CD8-positive, alpha-beta T cell (primary cell): ENCODE measurements at regions of chrX and their contacts with region 1.

Region 1: GRCh38 chrX:318739-319578 is at the start of gene GTPBP6:
- DNase-seq: peak; percentile 96 to 100 (median 98)
- ATAC-seq: peak; percentile 59
- H3K4me3 ChIP-seq: peak within 1 kb of the TSS; percentile 89 to 97
- H3K4me3 Mint-ChIP-seq: peak within 1 kb of the TSS; percentile 92
- H3K27ac ChIP-seq: peak within 1 kb of the TSS; percentile 95 to 96
- H3K27ac Mint-ChIP-seq: peak within 1 kb of the TSS; percentile 99
- H3K4me1 ChIP-seq: peaks cover 42% of the 10 kb centered on the region
- H3K4me1 Mint-ChIP-seq: peaks cover 25% of the 10 kb centered on the region
- H3K27me3 ChIP-seq: no peaks in the 10 kb centered on the region
- H3K27me3 Mint-ChIP-seq: no peaks in the 10 kb centered on the region
- CTCF ChIP-seq: no peak
- total RNA-seq, gene GTPBP6: 62.2 to 62.5 TPM

Region 2: DNA sequence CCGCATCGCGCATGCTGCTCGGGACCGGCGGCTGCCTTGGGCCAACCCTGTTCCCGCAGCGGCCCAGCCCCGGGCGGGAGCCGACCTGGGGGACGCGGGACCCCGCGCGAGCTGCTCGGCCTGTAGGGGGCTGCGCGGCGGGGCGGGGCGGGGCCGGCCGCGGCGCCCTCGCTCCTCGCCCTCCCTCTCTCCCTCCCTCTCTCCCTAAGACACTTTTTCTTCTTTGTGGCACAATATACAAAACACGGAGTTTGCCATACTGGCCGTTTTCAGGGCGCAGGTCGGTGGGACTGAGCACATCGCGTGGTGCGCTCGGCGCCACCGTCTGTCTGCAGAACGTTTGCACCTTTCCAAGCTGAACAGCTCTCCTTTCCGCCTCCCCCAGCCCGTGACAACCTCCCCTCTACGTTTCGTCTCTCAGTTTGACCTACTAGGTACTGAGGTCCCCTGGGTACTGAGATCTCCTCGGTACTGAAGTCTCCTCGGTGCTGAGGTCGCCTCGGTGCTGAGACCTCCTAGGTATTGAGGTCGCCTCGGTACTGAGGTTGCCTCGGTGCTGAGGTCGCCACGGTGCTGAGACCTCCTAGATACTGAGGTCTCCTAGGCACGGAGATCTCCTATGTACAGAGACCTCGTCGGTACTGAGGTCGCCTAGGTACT is 298.9 kb before region 1 on chrX:
- CTCF ChIA-PET with region 1: no interaction called
- POLR2A ChIA-PET with region 1: no interaction called
- intact Hi-C with region 1: no loop called
- DNase-seq: peak in 4 of 9 experiments; percentile 19 to 49 (median 48)
- ATAC-seq: no peak
- H3K4me3 ChIP-seq: peak overlapping the region in 1 of 2 experiments; percentile 37
- H3K4me3 Mint-ChIP-seq: no peak overlapping the region
- H3K27ac ChIP-seq: no peak overlapping the region
- H3K27ac Mint-ChIP-seq: no peak overlapping the region
- H3K4me1 ChIP-seq: peaks cover 4% of the 10 kb centered on the region
- H3K4me1 Mint-ChIP-seq: no peaks in the 10 kb centered on the region
- H3K27me3 ChIP-seq: no peaks in the 10 kb centered on the region
- H3K27me3 Mint-ChIP-seq: no peaks in the 10 kb centered on the region
- CTCF ChIP-seq: no peak

Region 3: GRCh38 chrX:250965-251364 is 68.0 kb before region 1 on chrX:
- CTCF ChIA-PET with region 1: no interaction called
- POLR2A ChIA-PET with region 1: no interaction called
- intact Hi-C with region 1: loop called in 1 of 2 experiments (anchors 2 kb)
- DNase-seq: peak in 4 of 9 experiments; percentile 16 to 56 (median 26)
- ATAC-seq: peak; percentile 81
- H3K4me3 ChIP-seq: peak overlapping the region in 1 of 2 experiments; percentile 2
- H3K4me3 Mint-ChIP-seq: peak overlapping the region; percentile 63
- H3K27ac ChIP-seq: peak overlapping the region; percentile 45 to 80
- H3K27ac Mint-ChIP-seq: peak overlapping the region; percentile 96
- H3K4me1 ChIP-seq: peaks cover 16% of the 10 kb centered on the region
- H3K4me1 Mint-ChIP-seq: peaks cover 26% of the 10 kb centered on the region
- H3K27me3 ChIP-seq: no peaks in the 10 kb centered on the region
- H3K27me3 Mint-ChIP-seq: no peaks in the 10 kb centered on the region
- CTCF ChIP-seq: no peak

Region 4: DNA sequence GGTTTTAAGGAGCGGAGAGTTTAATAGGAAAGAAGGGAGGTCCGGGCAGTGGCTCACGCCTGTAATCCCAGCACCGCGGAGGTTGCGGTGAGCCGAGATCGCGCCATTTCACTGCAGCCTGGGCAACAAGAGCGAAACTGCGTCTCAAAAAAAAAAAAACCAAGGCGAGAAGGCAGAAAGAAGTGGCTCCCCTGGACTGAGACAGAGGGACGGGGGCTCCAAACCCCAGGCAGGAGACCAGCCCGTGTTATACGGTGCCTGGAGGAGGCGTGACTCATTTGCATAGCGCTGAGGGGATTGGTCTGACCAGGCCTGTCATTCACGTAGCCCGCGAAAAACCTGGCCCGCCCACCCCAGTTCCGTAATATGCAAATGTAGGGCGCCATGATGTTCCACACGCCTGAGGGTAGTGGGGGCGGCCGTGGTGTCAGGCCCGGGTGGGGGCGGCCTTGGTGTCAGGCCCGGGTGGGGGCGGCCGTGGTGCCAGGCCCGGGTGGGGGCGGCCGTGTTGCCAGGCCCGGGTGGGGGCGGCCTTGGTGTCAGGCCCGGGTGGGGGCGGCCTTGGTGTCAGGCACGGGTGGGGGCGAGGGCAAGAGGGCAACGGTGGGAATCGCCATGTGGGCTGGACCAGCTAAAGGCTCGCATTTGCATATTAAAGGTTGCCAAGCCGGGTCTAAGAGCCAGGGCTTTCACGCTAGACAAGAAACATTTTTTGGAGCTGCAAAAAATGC is 35.7 kb before region 1 on chrX:
- CTCF ChIA-PET with region 1: no interaction called
- POLR2A ChIA-PET with region 1: no interaction called
- intact Hi-C with region 1: loop called (anchors 1 kb)
- DNase-seq: peak; percentile 78 to 94 (median 89)
- ATAC-seq: peak; percentile 99
- H3K4me3 ChIP-seq: peak overlapping the region; percentile 64 to 73
- H3K4me3 Mint-ChIP-seq: peak overlapping the region; percentile 91
- H3K27ac ChIP-seq: peak overlapping the region; percentile 54 to 61
- H3K27ac Mint-ChIP-seq: peak overlapping the region; percentile 90
- H3K4me1 ChIP-seq: peaks cover 18% of the 10 kb centered on the region
- H3K4me1 Mint-ChIP-seq: peaks cover 27% of the 10 kb centered on the region
- H3K27me3 ChIP-seq: no peaks in the 10 kb centered on the region
- H3K27me3 Mint-ChIP-seq: no peaks in the 10 kb centered on the region
- CTCF ChIP-seq: no peak

Region 5: GRCh38 chrX:331151-331774 is 12.3 kb after region 1 on chrX:
- CTCF ChIA-PET with region 1: no interaction called
- POLR2A ChIA-PET with region 1: no interaction called
- intact Hi-C with region 1: no loop called
- DNase-seq: peak in 3 of 9 experiments; percentile 37 to 46 (median 37)
- ATAC-seq: peak; percentile 81
- H3K4me3 ChIP-seq: peak overlapping the region; percentile 34 to 40
- H3K4me3 Mint-ChIP-seq: peak overlapping the region; percentile 58
- H3K27ac ChIP-seq: no peak overlapping the region
- H3K27ac Mint-ChIP-seq: no peak overlapping the region
- H3K4me1 ChIP-seq: peaks cover 12% of the 10 kb centered on the region
- H3K4me1 Mint-ChIP-seq: no peaks in the 10 kb centered on the region
- H3K27me3 ChIP-seq: peaks cover 0 to 16% of the 10 kb centered on the region in 2 experiments
- H3K27me3 Mint-ChIP-seq: no peaks in the 10 kb centered on the region
- CTCF ChIP-seq: no peak

Region 6: DNA sequence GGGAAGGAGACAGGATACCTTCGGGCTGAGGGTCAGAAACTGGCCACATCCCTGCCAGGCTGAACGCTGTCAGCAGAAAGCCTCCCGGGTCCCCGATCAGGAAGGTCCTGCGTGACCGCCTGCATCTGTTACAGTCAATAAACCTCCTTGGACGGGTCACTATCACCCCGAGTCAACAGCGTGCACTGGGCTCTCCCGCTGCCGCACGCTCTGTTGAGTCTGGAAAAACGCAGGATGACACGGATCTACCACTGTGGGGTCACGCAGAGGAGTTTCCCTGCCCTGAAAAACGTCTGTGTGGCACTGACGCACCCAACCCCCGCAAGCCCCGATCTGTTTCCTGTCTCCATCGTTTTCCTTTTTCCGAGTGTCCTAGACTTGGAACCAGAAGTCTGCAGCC is 55.6 kb after region 1 on chrX:
- CTCF ChIA-PET with region 1: no interaction called
- POLR2A ChIA-PET with region 1: no interaction called
- intact Hi-C with region 1: no loop called
- DNase-seq: no peak
- ATAC-seq: no peak
- H3K4me3 ChIP-seq: no peak overlapping the region
- H3K4me3 Mint-ChIP-seq: peak overlapping the region; percentile 83
- H3K27ac ChIP-seq: no peak overlapping the region
- H3K27ac Mint-ChIP-seq: no peak overlapping the region
- H3K4me1 ChIP-seq: peaks cover 7% of the 10 kb centered on the region
- H3K4me1 Mint-ChIP-seq: peaks cover 57% of the 10 kb centered on the region
- H3K27me3 ChIP-seq: peaks cover 3 to 13% of the 10 kb centered on the region in 2 experiments
- H3K27me3 Mint-ChIP-seq: peaks cover 31% of the 10 kb centered on the region
- CTCF ChIP-seq: no peak

Region 7: DNA sequence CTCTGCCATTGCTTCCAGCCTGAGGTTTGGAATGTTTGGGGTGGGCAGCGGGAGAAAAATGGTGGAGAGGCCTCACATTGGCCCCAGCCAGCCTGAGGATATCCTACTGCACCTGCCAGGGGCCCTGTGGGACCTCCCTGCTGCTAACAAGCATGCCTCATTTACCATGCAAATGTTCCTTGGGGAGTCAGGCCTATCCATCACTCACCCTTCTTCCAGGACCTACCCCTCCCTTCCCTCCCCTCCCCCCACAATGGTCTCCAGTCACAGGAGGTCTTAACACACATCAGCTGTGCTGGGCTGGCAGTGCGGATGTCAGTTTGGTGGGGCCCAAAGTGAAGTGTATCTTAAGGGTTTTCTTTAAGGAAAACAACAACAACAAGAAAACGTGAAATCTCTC is 450.8 kb after region 1 on chrX:
- CTCF ChIA-PET with region 1: no interaction called
- POLR2A ChIA-PET with region 1: no interaction called
- intact Hi-C with region 1: no loop called
- DNase-seq: no peak
- ATAC-seq: no peak
- H3K4me3 ChIP-seq: no peak overlapping the region
- H3K4me3 Mint-ChIP-seq: no peak overlapping the region
- H3K27ac ChIP-seq: no peak overlapping the region
- H3K27ac Mint-ChIP-seq: no peak overlapping the region
- H3K4me1 ChIP-seq: no peaks in the 10 kb centered on the region
- H3K4me1 Mint-ChIP-seq: no peaks in the 10 kb centered on the region
- H3K27me3 ChIP-seq: no peaks in the 10 kb centered on the region
- H3K27me3 Mint-ChIP-seq: peaks cover 10% of the 10 kb centered on the region
- CTCF ChIP-seq: no peak